MCF 10A (cell line): ENCODE measurements at regions of chr5 and their contacts with region 1.

Region 1: GRCh38 chr5:157265714-157266285 is at the start of gene CYFIP2:
- DNase-seq: peak; percentile 56
- H3K4me3 Mint-ChIP-seq: peak within 1 kb of the TSS; percentile 85
- H3K27ac Mint-ChIP-seq: no peak within 1 kb of the TSS
- H3K4me1 Mint-ChIP-seq: peaks cover 32% of the 10 kb centered on the region
- H3K27me3 Mint-ChIP-seq: peaks cover 10% of the 10 kb centered on the region
- CTCF ChIP-seq: no peak
- total RNA-seq, gene CYFIP2: 50.5 and 50.8 TPM in 2 replicates

Region 2: GRCh38 chr5:157142317-157143126 is 123.3 kb before region 1 on chr5 and contains the start of gene MED7:
- CTCF ChIA-PET with region 1: interaction called, 3 read pairs
- POLR2A ChIA-PET with region 1: interaction called, 14 read pairs
- intact Hi-C with region 1: no loop called
- DNase-seq: peak; percentile 100
- H3K4me3 Mint-ChIP-seq: peak within 1 kb of the TSS; percentile 83
- H3K27ac Mint-ChIP-seq: peak within 1 kb of the TSS; percentile 94
- H3K4me1 Mint-ChIP-seq: peaks cover 7% of the 10 kb centered on the region
- H3K27me3 Mint-ChIP-seq: no peaks in the 10 kb centered on the region
- CTCF ChIP-seq: no peak
- total RNA-seq, gene MED7: 14.7 and 16.9 TPM in 2 replicates

Region 3: DNA sequence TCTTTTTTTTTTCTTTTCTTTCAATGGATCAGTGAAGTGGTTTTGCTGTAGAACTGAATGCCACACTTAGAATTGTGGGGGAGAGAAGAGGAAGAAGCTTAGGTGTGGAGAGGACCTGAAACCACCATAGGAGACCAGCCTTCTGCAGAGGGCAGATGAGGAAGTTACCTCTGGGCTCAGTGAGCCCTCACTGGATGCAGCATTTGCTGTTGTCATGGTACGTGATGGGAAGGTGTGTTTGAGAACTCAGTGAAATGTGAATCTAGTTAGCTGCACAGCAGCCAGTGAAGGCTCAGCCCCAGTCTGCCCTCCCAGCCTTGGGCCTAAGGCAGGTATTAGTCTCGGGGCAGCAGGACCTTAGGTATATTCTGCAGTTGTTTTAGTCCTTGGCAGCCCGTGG is 17.6 kb after region 1 on chr5:
- CTCF ChIA-PET with region 1: interaction called, 8 read pairs
- POLR2A ChIA-PET with region 1: interaction called, 32 read pairs
- intact Hi-C with region 1: no loop called
- DNase-seq: no peak
- H3K4me3 Mint-ChIP-seq: no peak overlapping the region
- H3K27ac Mint-ChIP-seq: no peak overlapping the region
- H3K4me1 Mint-ChIP-seq: peaks cover 19% of the 10 kb centered on the region
- H3K27me3 Mint-ChIP-seq: no peaks in the 10 kb centered on the region
- CTCF ChIP-seq: no peak

Region 4: DNA sequence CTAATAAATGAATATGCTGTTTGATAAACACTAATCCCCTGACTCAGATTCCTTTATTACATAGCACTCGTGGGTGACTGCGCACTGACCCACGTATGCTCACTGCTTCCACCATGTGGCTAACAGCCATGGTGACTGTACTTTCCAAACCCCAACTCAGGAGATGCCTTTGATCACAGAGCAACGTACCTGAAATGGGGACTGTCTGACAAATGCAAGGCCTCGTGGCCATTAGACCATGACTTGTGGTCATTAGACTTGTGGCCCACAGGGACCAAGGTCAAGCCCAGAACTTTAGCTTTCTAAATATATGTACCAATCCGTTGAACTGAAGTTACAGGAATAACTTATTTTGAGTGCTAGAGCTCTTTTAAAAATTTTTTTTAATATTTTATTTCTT is 46.7 kb after region 1 on chr5:
- CTCF ChIA-PET with region 1: interaction called, 249 read pairs
- POLR2A ChIA-PET with region 1: no interaction called
- intact Hi-C with region 1: no loop called
- DNase-seq: peak; percentile 67
- H3K4me3 Mint-ChIP-seq: no peak overlapping the region
- H3K27ac Mint-ChIP-seq: no peak overlapping the region
- H3K4me1 Mint-ChIP-seq: no peaks in the 10 kb centered on the region
- H3K27me3 Mint-ChIP-seq: no peaks in the 10 kb centered on the region
- CTCF ChIP-seq: peak; percentile 82